ENCODE measurements at regions of chr3 and their contacts with region 1.

Region 1: GRCh38 chr3:52851348-52851747 is 16.5 kb upstream of the MUSTN1 start:
- DNase-seq: peak; percentile 52 to 70 (median 60)
- ATAC-seq: peak; percentile 93
- H3K4me3 ChIP-seq: no peak overlapping the region
- H3K27ac ChIP-seq: no peak overlapping the region
- H3K4me1 ChIP-seq: no peaks in the 10 kb centered on the region; a peak in 1 of 5 replicates
- H3K27me3 ChIP-seq: no peaks in the 10 kb centered on the region
- CTCF ChIP-seq: peak; percentile 72 to 80 (median 74)
- EP300 ChIP-seq: no peak
- POLR2A ChIP-seq: no peak
- RAD21 ChIP-seq: peak; percentile 84 to 93

Region 2: GRCh38 chr3:52934630-52935530 is 83.5 kb after region 1 on chr3:
- CTCF ChIA-PET with region 1: no interaction called
- POLR2A ChIA-PET with region 1: interaction called, 3 read pairs
- in situ Hi-C with region 1: no loop called
- intact Hi-C with region 1: loop called (anchors 1 kb)
- DNase-seq: peak; percentile 45 to 59 (median 54)
- ATAC-seq: peak; percentile 89
- H3K4me3 ChIP-seq: no peak overlapping the region
- H3K27ac ChIP-seq: no peak overlapping the region
- H3K4me1 ChIP-seq: no peaks in the 10 kb centered on the region; a peak in 1 of 5 replicates
- H3K27me3 ChIP-seq: no peaks in the 10 kb centered on the region
- CTCF ChIP-seq: peak; percentile 67 to 75 (median 72)
- EP300 ChIP-seq: no peak
- POLR2A ChIP-seq: no peak
- RAD21 ChIP-seq: peak; percentile 35 to 65

Region 3: GRCh38 chr3:52986938-52987337 is 135.6 kb after region 1 on chr3:
- CTCF ChIA-PET with region 1: interaction called, 5 read pairs
- POLR2A ChIA-PET with region 1: interaction called, 3 read pairs
- in situ Hi-C with region 1: no loop called
- intact Hi-C with region 1: loop called (anchors 1 kb)
- DNase-seq: peak in 1 of 4 experiments; percentile 35
- ATAC-seq: no peak
- H3K4me3 ChIP-seq: no peak overlapping the region
- H3K27ac ChIP-seq: no peak overlapping the region
- H3K4me1 ChIP-seq: peaks cover 0 to 11% of the 10 kb centered on the region in 2 experiments; a peak in 2 of 5 replicates
- H3K27me3 ChIP-seq: no peaks in the 10 kb centered on the region
- CTCF ChIP-seq: peak; percentile 45 to 69 (median 54); a peak in 5 of 6 replicates
- EP300 ChIP-seq: no peak
- POLR2A ChIP-seq: no peak
- RAD21 ChIP-seq: peak; percentile 42 to 60

Region 4: GRCh38 chr3:53072653-53073552 is 221.6 kb after region 1 on chr3:
- CTCF ChIA-PET with region 1: interaction called, 5 read pairs
- POLR2A ChIA-PET with region 1: no interaction called
- in situ Hi-C with region 1: loop called (anchors 10 kb)
- intact Hi-C with region 1: loop called (anchors 1 kb)
- DNase-seq: peak; percentile 78 to 86 (median 80)
- ATAC-seq: peak; percentile 97
- H3K4me3 ChIP-seq: peak overlapping the region; percentile 46
- H3K27ac ChIP-seq: peak overlapping the region; percentile 40; the same call in 2 of the 3 replicates
- H3K4me1 ChIP-seq: peaks cover 14 to 24% of the 10 kb centered on the region in 2 experiments; a peak in 4 of 5 replicates
- H3K27me3 ChIP-seq: no peaks in the 10 kb centered on the region
- CTCF ChIP-seq: peak; percentile 80 to 83 (median 80)
- EP300 ChIP-seq: no peak
- POLR2A ChIP-seq: no peak
- RAD21 ChIP-seq: peak; percentile 73 to 85

Region 5: DNA sequence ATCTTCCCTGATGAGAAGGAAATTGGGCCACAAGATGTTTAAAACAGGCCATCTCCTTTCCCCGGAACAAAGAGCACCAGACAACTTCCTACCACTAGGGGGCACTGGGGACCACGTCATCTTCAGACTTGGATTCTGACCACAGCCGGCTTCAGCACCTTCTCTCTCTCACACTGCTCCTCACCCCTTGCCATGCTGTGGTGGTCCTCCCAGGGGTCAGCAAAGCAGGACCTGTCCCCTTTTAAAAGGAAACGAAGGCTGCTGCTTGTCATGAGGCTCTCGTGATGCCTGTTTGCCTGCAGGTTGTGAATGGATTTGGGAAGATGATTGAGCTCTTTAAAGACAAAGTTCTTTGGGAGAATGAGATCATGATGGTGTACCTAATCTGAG is 262.7 kb after region 1 on chr3:
- CTCF ChIA-PET with region 1: no interaction called
- POLR2A ChIA-PET with region 1: no interaction called
- in situ Hi-C with region 1: no loop called
- intact Hi-C with region 1: loop called (anchors 5 kb)
- DNase-seq: peak; percentile 75 to 81 (median 77)
- ATAC-seq: peak; percentile 94
- H3K4me3 ChIP-seq: no peak overlapping the region
- H3K27ac ChIP-seq: no peak overlapping the region
- H3K4me1 ChIP-seq: peaks cover 0 to 16% of the 10 kb centered on the region in 2 experiments; a peak in 3 of 5 replicates
- H3K27me3 ChIP-seq: no peaks in the 10 kb centered on the region
- CTCF ChIP-seq: peak; percentile 82 to 90 (median 83)
- EP300 ChIP-seq: no peak
- POLR2A ChIP-seq: no peak
- RAD21 ChIP-seq: peak; percentile 79 to 85

Region 6: DNA sequence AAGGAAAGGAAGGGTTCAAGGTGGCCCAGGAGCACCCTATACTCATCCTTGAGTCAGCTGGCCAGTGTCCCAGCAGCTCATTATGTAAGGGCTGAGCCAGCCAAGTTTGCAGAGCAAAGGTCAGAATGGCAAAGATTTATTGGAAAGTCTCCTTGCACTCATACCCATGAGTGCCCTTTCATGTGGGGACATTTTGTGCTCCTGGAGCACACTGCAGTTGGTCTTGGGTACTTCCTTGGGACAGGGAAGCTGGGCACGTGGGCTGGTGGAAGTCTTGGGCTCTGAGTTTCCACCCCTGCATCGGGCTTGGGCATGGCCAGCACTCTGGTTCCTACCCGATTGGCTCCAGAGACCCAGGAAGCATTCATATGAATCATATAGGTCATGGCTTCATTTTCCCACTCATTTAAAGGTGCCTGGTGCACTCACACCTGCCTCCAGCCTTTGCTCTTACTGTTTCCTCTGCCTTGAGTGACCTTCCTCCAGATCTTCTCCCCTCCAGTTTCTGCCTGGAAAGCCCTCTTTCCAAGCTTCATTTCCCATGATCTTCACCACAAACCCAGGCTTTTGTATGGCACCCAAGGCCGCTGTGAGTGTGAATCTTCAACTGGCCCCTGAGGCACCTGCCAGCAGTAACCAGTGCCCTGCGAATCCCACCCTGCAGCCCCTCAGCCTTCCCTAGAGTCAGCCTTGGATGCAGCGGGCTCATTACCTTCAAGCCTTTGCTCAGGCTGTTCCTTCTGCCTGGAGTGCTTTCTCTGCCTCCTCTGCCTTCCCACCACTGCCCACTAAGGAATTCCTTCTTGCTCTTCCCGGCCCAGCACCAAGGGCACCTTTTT is 299.1 kb after region 1 on chr3:
- CTCF ChIA-PET with region 1: no interaction called
- POLR2A ChIA-PET with region 1: no interaction called
- in situ Hi-C with region 1: no loop called
- intact Hi-C with region 1: no loop called
- DNase-seq: no peak
- ATAC-seq: no peak
- H3K4me3 ChIP-seq: no peak overlapping the region
- H3K27ac ChIP-seq: no peak overlapping the region
- H3K4me1 ChIP-seq: peaks cover 0 to 8% of the 10 kb centered on the region in 2 experiments; a peak in 2 of 5 replicates
- H3K27me3 ChIP-seq: peaks cover 0 to 5% of the 10 kb centered on the region in 2 experiments; a peak in 1 of 5 replicates
- CTCF ChIP-seq: no peak
- EP300 ChIP-seq: no peak
- POLR2A ChIP-seq: no peak
- RAD21 ChIP-seq: no peak

Region 7: DNA sequence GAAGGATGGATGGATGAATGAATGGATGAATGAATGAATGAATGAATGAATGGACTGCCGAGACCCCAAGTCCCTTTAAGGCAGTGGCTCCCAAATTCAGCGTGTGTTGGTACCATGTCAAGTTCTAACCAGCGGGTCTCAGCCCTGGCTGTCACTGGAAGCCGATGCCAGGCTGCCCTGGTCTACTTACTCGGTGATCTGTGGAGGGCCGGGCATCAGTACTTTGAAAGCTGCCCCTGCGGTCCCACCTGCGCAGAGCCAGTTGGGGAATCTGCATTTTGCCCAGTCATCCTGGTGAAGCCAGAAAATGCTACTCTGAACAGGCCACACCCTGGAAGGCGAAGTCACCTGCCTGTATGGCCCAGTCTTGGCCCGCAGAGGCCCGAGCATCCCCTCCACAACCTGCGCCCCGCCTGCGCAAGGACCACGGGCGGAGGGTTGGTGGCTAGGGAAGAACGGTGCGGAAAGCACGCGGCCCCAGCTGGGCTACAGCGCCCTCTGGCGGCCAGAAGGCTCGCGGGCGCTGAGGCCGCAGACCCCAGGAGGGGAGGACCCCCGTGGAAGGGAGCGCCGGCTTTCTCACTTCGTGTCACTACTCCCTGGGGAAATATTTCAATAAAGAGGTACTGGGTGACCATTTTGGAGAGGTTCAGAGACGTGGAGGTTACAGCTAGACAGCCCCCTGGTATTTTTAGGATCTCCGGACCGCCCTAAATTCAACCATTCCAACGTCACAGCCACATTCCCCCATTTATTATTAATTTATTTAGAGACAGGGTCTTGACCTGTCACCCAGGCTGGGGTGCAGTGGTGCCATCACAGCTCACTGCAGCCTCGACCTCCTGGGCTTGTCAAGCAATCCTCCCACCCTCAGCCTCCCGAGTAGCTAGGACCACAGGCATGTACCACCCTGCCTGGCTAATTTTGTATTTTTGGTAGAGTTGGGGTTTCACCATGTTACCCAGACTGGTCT is 344.5 kb after region 1 on chr3:
- CTCF ChIA-PET with region 1: no interaction called
- POLR2A ChIA-PET with region 1: no interaction called
- in situ Hi-C with region 1: no loop called
- intact Hi-C with region 1: loop called (anchors 2 kb)
- DNase-seq: peak; percentile 66 to 76 (median 74)
- ATAC-seq: peak; percentile 87
- H3K4me3 ChIP-seq: no peak overlapping the region
- H3K27ac ChIP-seq: no peak overlapping the region
- H3K4me1 ChIP-seq: peaks cover 9 to 19% of the 10 kb centered on the region in 2 experiments; a peak in 4 of 5 replicates
- H3K27me3 ChIP-seq: no peaks in the 10 kb centered on the region
- CTCF ChIP-seq: peak; percentile 79 to 89 (median 86)
- EP300 ChIP-seq: no peak
- POLR2A ChIP-seq: no peak
- RAD21 ChIP-seq: peak; percentile 78 to 88

Measured in K562 (cell line).